GM10248 (cell line): ENCODE measurements at regions of chr2 and their contacts with region 1.

Region 1: GRCh38 chr2:205731583-205732071 is 49.3 kb downstream of the NRP2 start:
- DNase-seq: peak; percentile 39
- CTCF ChIP-seq: no peak

Region 2: GRCh38 chr2:205721057-205721449 is 10.6 kb before region 1 on chr2:
- CTCF ChIA-PET with region 1: interaction called, 11 read pairs
- POLR2A ChIA-PET with region 1: no interaction called
- DNase-seq: no peak
- CTCF ChIP-seq: no peak

Region 3: DNA sequence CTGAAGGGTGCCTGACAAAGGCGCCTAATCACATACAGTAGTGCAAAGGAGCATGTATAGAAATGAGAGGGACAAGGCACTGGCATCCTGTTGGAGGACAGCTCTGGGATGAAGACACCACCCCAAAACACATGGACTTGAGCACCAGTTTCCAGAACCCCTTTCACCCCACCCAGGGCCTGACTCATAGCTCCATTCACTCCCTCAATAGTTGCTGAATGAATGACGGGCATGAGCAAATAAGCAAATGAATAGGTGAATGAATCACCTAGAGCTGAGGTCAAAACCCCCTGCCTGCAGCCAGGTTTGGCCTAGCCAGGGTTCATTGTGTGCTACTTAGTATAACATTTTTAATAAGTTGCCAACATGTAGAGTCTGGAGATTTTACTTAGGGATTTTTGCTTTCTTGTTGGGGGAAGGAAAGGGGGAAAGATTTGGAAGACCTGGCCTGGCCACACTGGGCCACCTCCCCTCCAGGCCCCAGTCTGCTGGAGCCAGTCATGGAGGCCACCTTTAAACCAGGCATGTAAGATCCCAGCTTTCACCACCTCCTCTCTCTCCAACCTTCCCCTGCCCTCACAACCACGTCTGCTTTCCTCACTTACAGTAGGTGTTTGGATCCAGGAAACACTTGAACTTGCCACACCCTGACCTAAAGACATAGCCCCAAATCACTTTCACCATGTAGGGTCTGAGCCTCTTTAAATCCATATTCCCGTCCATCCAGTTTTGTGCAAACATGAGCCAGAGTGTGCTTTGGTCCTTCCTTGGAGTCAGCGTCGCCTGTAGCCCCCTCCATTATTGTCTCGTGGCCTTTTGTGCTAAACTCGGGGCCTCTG is 17.2 kb after region 1 on chr2:
- CTCF ChIA-PET with region 1: no interaction called
- POLR2A ChIA-PET with region 1: no interaction called
- DNase-seq: no peak
- CTCF ChIP-seq: no peak